ENCODE measurements at regions of chr2 and their contacts with region 1.

Region 1: GRCh38 chr2:162301151-162301804 is 17.2 kb downstream of the IFIH1 start:
- ATAC-seq: peak; percentile 41 to 91 (median 70)
- H3K4me3 ChIP-seq: no peak overlapping the region
- H3K27ac ChIP-seq: no peak overlapping the region
- H3K4me1 ChIP-seq: no peaks in the 10 kb centered on the region

Region 2: GRCh38 chr2:161569401-161569800 is 731.9 kb before region 1 on chr2:
- in situ Hi-C with region 1: no loop called
- ATAC-seq: no peak
- H3K4me3 ChIP-seq: no peak overlapping the region
- H3K27ac ChIP-seq: no peak overlapping the region
- H3K4me1 ChIP-seq: no peaks in the 10 kb centered on the region

Region 3: DNA sequence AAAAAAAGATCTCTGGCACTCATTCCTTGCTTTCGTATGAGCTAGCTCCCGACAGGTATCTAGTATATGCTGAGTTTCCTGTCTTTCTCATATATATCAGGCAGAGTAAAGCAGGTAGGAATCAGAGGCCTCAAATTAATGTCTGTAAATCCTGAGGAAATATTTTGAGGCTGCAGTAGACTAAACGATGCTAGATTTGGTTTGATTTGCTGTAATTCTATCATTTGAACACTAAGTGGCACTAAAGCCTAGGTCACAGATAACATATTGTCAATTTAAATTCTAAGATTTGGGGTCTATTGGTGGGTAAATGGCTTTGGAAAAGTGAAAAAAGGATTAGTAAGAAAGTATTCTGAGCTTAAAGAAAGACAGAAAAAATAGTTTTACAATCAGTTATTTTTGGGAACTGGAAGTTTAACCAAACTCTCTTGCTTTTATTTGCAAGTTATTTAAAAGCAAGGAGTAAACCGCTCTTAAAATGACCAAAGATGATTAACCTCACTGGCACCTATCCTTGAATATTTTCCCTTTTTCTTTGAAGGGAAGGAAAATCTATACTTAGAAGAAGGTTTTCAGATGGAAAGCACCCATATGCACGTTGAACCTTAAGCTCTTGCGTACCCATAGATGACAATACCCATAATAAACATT is 714.6 kb before region 1 on chr2:
- in situ Hi-C with region 1: loop called in 2 of 9 experiments (anchors 25 kb)
- ATAC-seq: peak in 3 of 8 experiments; percentile 32 to 38 (median 32)
- H3K4me3 ChIP-seq: no peak overlapping the region
- H3K27ac ChIP-seq: no peak overlapping the region
- H3K4me1 ChIP-seq: no peaks in the 10 kb centered on the region

Region 4: GRCh38 chr2:161613161-161613560 is 688.1 kb before region 1 on chr2:
- in situ Hi-C with region 1: loop called in 1 of 9 experiments (anchors 25 kb)
- ATAC-seq: no peak
- H3K4me3 ChIP-seq: no peak overlapping the region
- H3K27ac ChIP-seq: no peak overlapping the region
- H3K4me1 ChIP-seq: no peaks in the 10 kb centered on the region

Region 5: DNA sequence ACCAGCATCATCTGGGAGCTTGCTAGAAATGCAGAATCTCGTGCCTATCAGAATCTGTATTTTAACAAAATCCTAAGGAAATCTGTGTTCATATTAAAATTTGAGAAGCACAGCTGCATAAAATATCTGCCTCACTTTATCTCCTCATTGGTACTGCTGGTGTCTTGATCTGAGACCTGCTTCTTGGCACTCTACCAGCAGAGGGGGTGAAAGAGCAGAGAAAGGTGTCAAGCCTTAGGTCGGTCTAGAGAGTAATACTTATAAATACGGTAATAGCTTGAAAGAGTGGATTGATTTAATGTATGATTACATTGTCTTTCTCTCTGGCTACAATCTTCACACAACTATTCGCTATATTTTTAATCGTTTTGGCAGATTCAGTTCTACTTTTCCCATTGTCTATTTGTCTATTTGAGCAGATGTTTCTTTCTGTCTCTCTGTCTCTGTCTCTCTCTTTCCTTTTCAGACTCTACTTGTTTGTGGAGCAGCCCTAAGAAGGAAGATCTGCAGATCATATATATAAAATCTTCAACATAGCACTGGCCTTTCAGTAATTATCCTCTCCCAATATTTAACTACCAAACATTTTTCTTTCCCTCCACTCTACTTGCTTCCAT is 147.6 kb before region 1 on chr2:
- in situ Hi-C with region 1: loop called in 3 of 9 experiments (anchors 10 to 25 kb)
- ATAC-seq: peak in 4 of 8 experiments; percentile 38 to 99 (median 97)
- H3K4me3 ChIP-seq: no peak overlapping the region
- H3K27ac ChIP-seq: no peak overlapping the region
- H3K4me1 ChIP-seq: peaks cover 0 to 4% of the 10 kb centered on the region in 2 donors

Region 6: GRCh38 chr2:162221064-162221463 is 80.2 kb before region 1 on chr2:
- in situ Hi-C with region 1: loop called in 1 of 9 experiments (anchors 10 kb)
- ATAC-seq: peak in 4 of 8 experiments; percentile 14 to 60 (median 55)
- H3K4me3 ChIP-seq: no peak overlapping the region
- H3K27ac ChIP-seq: no peak overlapping the region
- H3K4me1 ChIP-seq: no peaks in the 10 kb centered on the region

Measured in motor neuron (in vitro differentiated cells).